A549 (cell line): ENCODE measurements at regions of chr16 and their contacts with region 1.

Region 1: GRCh38 chr16:12095275-12096156 is 119.0 kb downstream of the SNX29 start:
- DNase-seq: peak; percentile 41 to 50
- ATAC-seq: peak; percentile 62 to 73; a peak in 5 of 6 replicates
- H3K4me3 ChIP-seq: no peak overlapping the region
- H3K27ac ChIP-seq: 0 out of 6 replicates have a peak overlapping the region, but pooled peaks have one; percentile 1 to 39
- H3K4me1 ChIP-seq: peaks cover 38% of the 10 kb centered on the region
- CTCF ChIP-seq: peak; percentile 94
- EP300 ChIP-seq: no peak
- POLR2A ChIP-seq: no peak
- RAD21 ChIP-seq: peak; percentile 88 to 90

Region 2: DNA sequence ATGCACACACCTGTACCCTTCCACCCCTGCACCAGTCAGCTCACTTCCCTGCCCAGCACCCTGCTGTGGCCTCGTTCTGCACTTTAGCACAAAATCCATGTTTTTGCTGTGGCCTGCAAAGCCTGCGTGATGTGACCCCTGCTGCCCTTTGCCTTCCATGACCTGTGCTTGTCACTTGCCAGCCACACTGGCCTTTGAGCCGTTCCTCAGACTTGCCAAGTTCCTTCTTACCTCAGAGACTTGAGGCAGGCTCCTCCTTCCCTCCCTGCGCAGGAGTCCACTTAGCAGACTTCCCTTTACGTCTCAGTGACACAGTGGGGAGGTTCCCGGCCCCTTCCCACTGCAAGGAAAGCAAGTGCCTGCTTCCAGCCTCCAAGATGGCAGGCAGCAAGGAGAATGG is 15.7 kb after region 1 on chr16:
- CTCF ChIA-PET with region 1: interaction called, 81 read pairs
- POLR2A ChIA-PET with region 1: no interaction called
- DNase-seq: no peak
- ATAC-seq: no peak
- H3K4me3 ChIP-seq: no peak overlapping the region
- H3K27ac ChIP-seq: no peak overlapping the region
- H3K4me1 ChIP-seq: no peaks in the 10 kb centered on the region
- CTCF ChIP-seq: no peak
- EP300 ChIP-seq: no peak
- POLR2A ChIP-seq: no peak
- RAD21 ChIP-seq: no peak

Region 3: GRCh38 chr16:12132850-12133440 is 37.4 kb after region 1 on chr16:
- CTCF ChIA-PET with region 1: interaction called, 12 read pairs
- POLR2A ChIA-PET with region 1: no interaction called
- DNase-seq: no peak
- ATAC-seq: no peak
- H3K4me3 ChIP-seq: no peak overlapping the region
- H3K27ac ChIP-seq: no peak overlapping the region
- H3K4me1 ChIP-seq: no peaks in the 10 kb centered on the region
- CTCF ChIP-seq: no peak
- EP300 ChIP-seq: no peak
- POLR2A ChIP-seq: no peak
- RAD21 ChIP-seq: no peak

Region 4: DNA sequence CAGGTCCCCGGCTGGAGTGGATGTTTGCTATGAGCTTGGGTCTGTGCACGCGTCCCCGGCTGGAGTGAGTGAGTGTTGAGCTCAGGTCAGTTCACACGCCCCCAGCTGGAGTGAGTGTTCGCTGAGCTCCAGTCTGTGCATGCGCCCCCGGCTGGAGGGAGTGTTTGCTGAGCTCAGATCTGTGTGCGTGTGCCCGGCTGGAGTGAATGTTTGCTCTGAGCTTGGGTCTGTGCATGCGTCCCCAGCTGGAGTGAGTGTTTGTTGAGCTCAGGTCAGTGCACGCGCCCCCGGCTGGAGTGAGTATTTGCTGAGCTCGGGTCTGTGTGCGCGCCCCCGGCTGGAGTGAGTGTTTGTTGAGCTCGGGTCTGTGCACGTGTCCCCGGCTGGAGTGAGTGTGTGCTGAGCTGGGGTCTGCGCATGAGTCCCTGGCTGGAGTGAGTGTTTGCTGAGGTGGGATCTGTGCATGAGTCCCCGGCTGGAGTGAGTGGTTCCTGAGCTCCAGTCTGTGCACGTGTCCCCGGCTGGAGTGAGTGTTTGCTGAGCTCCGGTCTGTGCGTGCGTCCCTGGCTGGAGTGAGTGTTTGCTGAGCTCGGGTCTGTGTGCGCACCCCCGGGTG is 165.2 kb after region 1 on chr16:
- CTCF ChIA-PET with region 1: interaction called, 13 read pairs
- POLR2A ChIA-PET with region 1: no interaction called
- DNase-seq: peak; percentile 64 to 71
- ATAC-seq: peak; percentile 89 to 99
- H3K4me3 ChIP-seq: peak overlapping the region; percentile 34
- H3K27ac ChIP-seq: peak overlapping the region in 1 of 2 experiments; percentile 25; a peak in 1 of 6 replicates
- H3K4me1 ChIP-seq: peaks cover 15% of the 10 kb centered on the region
- CTCF ChIP-seq: 0 out of 3 replicates have a peak, but pooled peaks have one; percentile 28
- EP300 ChIP-seq: no peak
- POLR2A ChIP-seq: no peak
- RAD21 ChIP-seq: peak in 1 of 2 experiments; percentile 27; a peak in 1 of 5 replicates

Region 5: DNA sequence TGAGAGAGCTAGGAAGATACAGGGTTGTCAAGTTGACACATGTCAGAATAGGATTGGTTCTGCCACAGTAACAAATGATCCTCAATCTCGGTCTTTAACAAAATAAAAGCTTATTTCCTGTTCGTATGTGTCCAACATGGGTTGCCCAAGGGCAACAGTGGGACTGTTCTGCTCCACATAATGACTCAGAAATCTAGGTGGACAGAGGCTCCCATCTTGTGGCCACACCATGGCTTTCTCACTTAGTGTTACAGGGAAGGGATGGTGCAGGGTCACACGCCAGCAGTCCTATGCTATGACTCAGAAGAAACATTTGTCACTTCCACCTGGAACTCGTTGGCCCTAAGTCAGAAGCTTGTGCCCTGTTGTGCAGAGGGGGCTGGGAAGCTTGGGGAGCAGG is 245.9 kb after region 1 on chr16:
- CTCF ChIA-PET with region 1: interaction called, 18 read pairs
- POLR2A ChIA-PET with region 1: no interaction called
- DNase-seq: peak in 1 of 2 experiments; percentile 46
- ATAC-seq: peak; percentile 67 to 71
- H3K4me3 ChIP-seq: no peak overlapping the region
- H3K27ac ChIP-seq: peak overlapping the region in 1 of 2 experiments; percentile 26; a peak in 1 of 6 replicates
- H3K4me1 ChIP-seq: peaks cover 18% of the 10 kb centered on the region
- CTCF ChIP-seq: no peak
- EP300 ChIP-seq: no peak
- POLR2A ChIP-seq: no peak
- RAD21 ChIP-seq: peak; percentile 8 to 42; a peak in 3 of 5 replicates

Region 6: DNA sequence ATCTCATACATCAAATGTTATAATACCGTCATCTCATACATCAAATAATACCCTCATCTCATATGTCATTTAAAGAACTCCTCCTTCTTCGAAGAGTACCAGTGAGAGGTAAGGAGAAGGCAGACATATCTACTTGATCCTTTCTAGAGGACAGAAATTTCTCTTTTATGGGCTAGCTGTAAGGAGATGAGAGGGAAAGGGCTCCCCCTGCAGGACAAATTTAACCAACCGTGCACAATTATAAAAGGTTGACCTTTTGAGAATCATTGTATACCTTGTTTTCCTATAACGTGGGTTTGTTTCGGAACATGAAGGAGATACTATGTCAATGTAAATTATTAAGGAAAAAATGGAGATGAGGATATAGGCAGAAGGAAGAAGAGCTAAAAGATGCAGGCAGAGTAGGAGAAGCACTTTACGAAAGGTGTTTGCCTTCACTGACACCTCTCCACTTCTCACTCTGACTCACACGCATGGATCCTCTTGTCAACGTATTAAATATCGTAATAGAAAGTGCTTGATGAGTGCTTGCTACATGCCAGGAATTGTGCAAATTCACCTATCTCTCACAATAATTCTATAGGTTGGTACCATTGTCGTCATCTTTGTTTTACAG is 1358.5 kb after region 1 on chr16:
- CTCF ChIA-PET with region 1: interaction called, 12 read pairs
- POLR2A ChIA-PET with region 1: no interaction called
- DNase-seq: peak; percentile 14 to 16
- ATAC-seq: peak in 1 of 2 experiments; percentile 55; a peak in 2 of 6 replicates
- H3K4me3 ChIP-seq: no peak overlapping the region
- H3K27ac ChIP-seq: no peak overlapping the region
- H3K4me1 ChIP-seq: no peaks in the 10 kb centered on the region
- CTCF ChIP-seq: peak; percentile 56
- EP300 ChIP-seq: no peak
- POLR2A ChIP-seq: no peak
- RAD21 ChIP-seq: peak; percentile 53 to 64; a peak in 4 of 5 replicates